Adrenal gland (tissue), 19 donors: ENCODE measurements at regions of chr6 and their contacts with region 1.

Region 1: GRCh38 chr6:129498950-129499842 is 210.8 kb downstream of the ARHGAP18 start:
- DNase-seq: peak in 1 of 7 donors; percentile 16
- H3K4me3 ChIP-seq: peak overlapping the region in 1 of 4 donors; percentile 22
- H3K27ac ChIP-seq: peak overlapping the region in 4 of 5 donors; percentile 25 to 74 (median 58)
- H3K4me1 ChIP-seq: peaks cover 11 to 35% of the 10 kb centered on the region in 2 donors
- H3K27me3 ChIP-seq: no peaks in the 10 kb centered on the region
- CTCF ChIP-seq: peak; percentile 43 to 83 (median 64)
- POLR2A ChIP-seq: no peak

Region 2: GRCh38 chr6:129331450-129332138 is 167.6 kb before region 1 on chr6:
- intact Hi-C with region 1: no loop called
- DNase-seq: no peak
- H3K4me3 ChIP-seq: no peak overlapping the region
- H3K27ac ChIP-seq: no peak overlapping the region
- H3K4me1 ChIP-seq: no peaks in the 10 kb centered on the region
- H3K27me3 ChIP-seq: no peaks in the 10 kb centered on the region
- CTCF ChIP-seq: no peak
- POLR2A ChIP-seq: no peak

Region 3: DNA sequence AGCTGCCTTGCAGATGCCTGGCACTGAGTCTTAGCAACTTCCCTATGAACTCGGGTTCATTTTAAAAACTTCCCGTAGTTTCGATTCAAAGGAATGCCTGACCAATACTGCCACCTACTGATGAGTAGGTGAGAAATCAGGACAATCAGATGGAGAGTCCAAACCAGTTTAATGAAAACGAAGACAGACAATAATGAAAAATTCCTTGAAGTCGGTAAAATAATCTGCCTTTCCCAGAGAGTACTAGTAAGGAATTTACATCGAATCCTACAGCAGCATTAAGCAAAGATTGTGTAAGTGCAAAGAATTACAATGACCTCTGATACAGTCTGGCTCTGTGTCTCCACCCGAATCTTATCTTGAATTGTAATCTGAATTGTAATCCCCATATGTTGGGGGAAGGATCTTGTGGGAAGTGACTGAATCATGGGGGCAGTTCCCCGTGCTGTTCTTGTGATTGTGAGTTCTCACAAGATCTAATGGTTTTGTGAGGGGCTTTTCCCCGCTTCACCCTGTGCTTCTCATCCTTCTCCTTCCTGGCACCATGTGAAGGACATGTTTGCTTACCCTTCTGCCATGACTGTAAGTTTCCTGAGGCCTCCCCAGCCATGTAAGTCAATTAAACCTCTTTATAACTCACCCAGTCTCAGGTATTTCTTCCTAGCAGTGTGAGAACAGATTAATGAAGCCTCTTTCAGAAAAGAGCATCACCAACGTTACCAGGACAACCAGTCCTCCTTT is 76.4 kb after region 1 on chr6:
- intact Hi-C with region 1: loop called (anchors 5 to 10 kb)
- DNase-seq: peak in 3 of 7 donors; percentile 16 to 35 (median 27)
- H3K4me3 ChIP-seq: peak overlapping the region in 1 of 4 donors; percentile 5
- H3K27ac ChIP-seq: no peak overlapping the region
- H3K4me1 ChIP-seq: no peaks in the 10 kb centered on the region
- H3K27me3 ChIP-seq: no peaks in the 10 kb centered on the region
- CTCF ChIP-seq: peak; percentile 49 to 80 (median 72)
- POLR2A ChIP-seq: no peak

Region 4: GRCh38 chr6:129583866-129584265 is 84.7 kb after region 1 on chr6:
- intact Hi-C with region 1: loop called (anchors 5 to 10 kb)
- DNase-seq: no peak
- H3K4me3 ChIP-seq: no peak overlapping the region
- H3K27ac ChIP-seq: no peak overlapping the region
- H3K4me1 ChIP-seq: peaks cover 0 to 4% of the 10 kb centered on the region in 2 donors
- H3K27me3 ChIP-seq: no peaks in the 10 kb centered on the region
- CTCF ChIP-seq: no peak
- POLR2A ChIP-seq: no peak

Region 5: DNA sequence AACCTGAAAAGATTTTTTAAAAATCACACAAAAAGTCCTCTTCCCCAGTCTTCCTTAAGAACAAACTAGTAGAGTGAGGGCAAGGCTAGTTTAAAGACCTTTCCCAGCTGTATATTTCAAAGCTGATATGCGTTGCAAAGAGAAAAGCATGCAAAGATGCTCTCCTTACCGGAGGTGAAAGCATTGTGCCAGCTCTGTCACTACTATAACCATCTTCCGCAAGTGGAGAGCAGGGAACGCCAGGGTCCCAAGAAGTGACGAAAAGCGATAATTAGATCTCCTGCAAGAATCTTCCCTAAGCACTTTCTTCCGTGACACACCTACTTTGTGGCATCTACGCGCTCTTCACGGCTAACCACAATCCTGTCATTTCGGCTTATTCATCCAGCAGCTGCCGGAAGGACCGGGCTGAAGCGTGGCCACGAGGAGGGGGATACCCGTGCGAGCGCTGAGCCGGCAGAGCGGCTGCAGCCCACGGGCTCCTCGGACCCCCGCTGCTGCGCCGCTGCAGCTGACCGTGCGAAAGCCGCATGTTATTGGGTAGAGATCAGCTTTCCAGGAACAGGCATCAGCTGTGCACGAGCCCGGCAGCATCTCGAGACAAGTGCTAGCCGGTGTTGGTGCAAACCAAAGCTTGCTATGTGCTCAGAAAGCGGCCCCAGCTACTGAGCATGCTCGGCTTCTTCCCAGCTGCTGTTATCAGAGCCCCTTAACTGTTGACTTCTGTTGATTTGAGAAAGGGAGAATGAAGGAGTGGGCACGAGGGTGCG is 267.9 kb after region 1 on chr6:
- intact Hi-C with region 1: loop called in 1 of 2 experiments (anchors 10 kb)
- DNase-seq: peak in 6 of 7 donors; percentile 37 to 68 (median 44)
- H3K4me3 ChIP-seq: peak overlapping the region in 2 of 4 donors; percentile 21 to 62
- H3K27ac ChIP-seq: no peak overlapping the region
- H3K4me1 ChIP-seq: peaks cover 6 to 11% of the 10 kb centered on the region in 2 donors
- H3K27me3 ChIP-seq: peaks cover 3% of the 10 kb centered on the region
- CTCF ChIP-seq: no peak
- POLR2A ChIP-seq: no peak